ENCODE measurements at regions of chr6 and their contacts with region 1.

Region 1: DNA sequence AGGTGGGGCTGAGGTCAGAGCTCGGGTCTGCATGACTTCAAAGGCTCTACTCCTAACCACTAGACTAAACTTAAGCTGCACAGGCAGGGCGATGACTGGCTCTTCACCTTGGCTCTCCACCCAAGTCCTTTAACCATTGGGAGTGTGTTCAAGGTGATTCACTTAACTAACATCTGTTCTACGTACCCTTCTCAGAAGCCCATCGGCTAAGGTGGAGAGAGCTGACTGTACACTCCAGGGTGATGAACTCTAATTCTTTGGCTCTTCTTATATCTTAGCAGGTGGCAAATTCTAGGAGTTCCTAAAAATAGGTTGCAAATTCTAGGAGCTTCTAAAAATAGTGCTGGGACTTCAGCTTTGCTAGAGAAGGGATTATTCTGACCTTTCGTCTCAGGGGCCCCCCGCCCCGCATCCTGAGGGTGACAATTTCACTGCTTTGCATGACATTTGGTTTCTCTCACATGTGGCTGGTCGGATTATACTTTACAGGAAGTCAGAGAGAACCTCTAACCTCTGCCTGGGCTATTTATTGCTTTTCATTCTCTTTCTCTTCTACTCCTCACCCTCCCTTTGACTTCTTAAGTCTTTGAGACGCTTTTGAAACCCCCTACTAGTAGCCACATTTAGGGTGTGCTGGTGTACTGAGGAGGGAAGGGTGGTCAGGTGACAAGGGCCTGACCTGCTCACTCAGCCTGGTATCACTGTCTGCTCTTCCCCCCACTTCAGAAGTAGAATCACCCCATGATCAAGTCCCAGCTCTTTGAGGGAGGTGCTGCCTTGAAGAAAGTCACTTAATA is 55.5 kb downstream of the PRDM1 start:
- DNase-seq: peak in 5 of 9 experiments; percentile 24 to 68 (median 56)
- ATAC-seq: peak; percentile 65
- H3K4me3 ChIP-seq: no peak overlapping the region
- H3K4me3 Mint-ChIP-seq: peak overlapping the region; percentile 67
- H3K27ac ChIP-seq: peak overlapping the region in 1 of 2 experiments; percentile 72
- H3K27ac Mint-ChIP-seq: peak overlapping the region; percentile 67
- H3K4me1 ChIP-seq: peaks cover 28% of the 10 kb centered on the region
- H3K4me1 Mint-ChIP-seq: peaks cover 41% of the 10 kb centered on the region
- H3K27me3 ChIP-seq: no peaks in the 10 kb centered on the region
- H3K27me3 Mint-ChIP-seq: no peaks in the 10 kb centered on the region
- CTCF ChIP-seq: no peak

Region 2: GRCh38 chr6:106103728-106104109 is 37.9 kb before region 1 on chr6:
- CTCF ChIA-PET with region 1: no interaction called
- POLR2A ChIA-PET with region 1: interaction called, 8 read pairs
- intact Hi-C with region 1: loop called in 1 of 2 experiments (anchors 5 kb)
- DNase-seq: peak in 5 of 9 experiments; percentile 45 to 79 (median 64)
- ATAC-seq: peak; percentile 62
- H3K4me3 ChIP-seq: peak overlapping the region; percentile 29 to 73
- H3K4me3 Mint-ChIP-seq: peak overlapping the region; percentile 90
- H3K27ac ChIP-seq: peak overlapping the region in 1 of 2 experiments; percentile 79
- H3K27ac Mint-ChIP-seq: peak overlapping the region; percentile 82
- H3K4me1 ChIP-seq: peaks cover 31% of the 10 kb centered on the region
- H3K4me1 Mint-ChIP-seq: peaks cover 60% of the 10 kb centered on the region
- H3K27me3 ChIP-seq: no peaks in the 10 kb centered on the region
- H3K27me3 Mint-ChIP-seq: peaks cover 11% of the 10 kb centered on the region
- CTCF ChIP-seq: no peak

Region 3: GRCh38 chr6:106194949-106195921 is 53.6 kb after region 1 on chr6:
- CTCF ChIA-PET with region 1: no interaction called
- POLR2A ChIA-PET with region 1: no interaction called
- intact Hi-C with region 1: loop called in 1 of 2 experiments (anchors 10 kb)
- DNase-seq: peak in 6 of 9 experiments; percentile 12 to 79 (median 44)
- ATAC-seq: peak; percentile 82
- H3K4me3 ChIP-seq: peak overlapping the region in 1 of 2 experiments; percentile 12
- H3K4me3 Mint-ChIP-seq: peak overlapping the region; percentile 46
- H3K27ac ChIP-seq: peak overlapping the region; percentile 13 to 71
- H3K27ac Mint-ChIP-seq: peak overlapping the region; percentile 81
- H3K4me1 ChIP-seq: peaks cover 35% of the 10 kb centered on the region
- H3K4me1 Mint-ChIP-seq: peaks cover 37% of the 10 kb centered on the region
- H3K27me3 ChIP-seq: no peaks in the 10 kb centered on the region
- H3K27me3 Mint-ChIP-seq: no peaks in the 10 kb centered on the region
- CTCF ChIP-seq: no peak

Region 4: GRCh38 chr6:106300944-106301343 is 159.3 kb after region 1 on chr6:
- CTCF ChIA-PET with region 1: no interaction called
- POLR2A ChIA-PET with region 1: no interaction called
- intact Hi-C with region 1: no loop called
- DNase-seq: peak in 2 of 9 experiments; percentile 41 to 55
- ATAC-seq: no peak
- H3K4me3 ChIP-seq: no peak overlapping the region
- H3K4me3 Mint-ChIP-seq: no peak overlapping the region
- H3K27ac ChIP-seq: no peak overlapping the region
- H3K27ac Mint-ChIP-seq: no peak overlapping the region
- H3K4me1 ChIP-seq: no peaks in the 10 kb centered on the region
- H3K4me1 Mint-ChIP-seq: peaks cover 14% of the 10 kb centered on the region
- H3K27me3 ChIP-seq: no peaks in the 10 kb centered on the region
- H3K27me3 Mint-ChIP-seq: no peaks in the 10 kb centered on the region
- CTCF ChIP-seq: peak; percentile 40